ENCODE measurements at regions of chr7 and their contacts with region 1.

Region 1: DNA sequence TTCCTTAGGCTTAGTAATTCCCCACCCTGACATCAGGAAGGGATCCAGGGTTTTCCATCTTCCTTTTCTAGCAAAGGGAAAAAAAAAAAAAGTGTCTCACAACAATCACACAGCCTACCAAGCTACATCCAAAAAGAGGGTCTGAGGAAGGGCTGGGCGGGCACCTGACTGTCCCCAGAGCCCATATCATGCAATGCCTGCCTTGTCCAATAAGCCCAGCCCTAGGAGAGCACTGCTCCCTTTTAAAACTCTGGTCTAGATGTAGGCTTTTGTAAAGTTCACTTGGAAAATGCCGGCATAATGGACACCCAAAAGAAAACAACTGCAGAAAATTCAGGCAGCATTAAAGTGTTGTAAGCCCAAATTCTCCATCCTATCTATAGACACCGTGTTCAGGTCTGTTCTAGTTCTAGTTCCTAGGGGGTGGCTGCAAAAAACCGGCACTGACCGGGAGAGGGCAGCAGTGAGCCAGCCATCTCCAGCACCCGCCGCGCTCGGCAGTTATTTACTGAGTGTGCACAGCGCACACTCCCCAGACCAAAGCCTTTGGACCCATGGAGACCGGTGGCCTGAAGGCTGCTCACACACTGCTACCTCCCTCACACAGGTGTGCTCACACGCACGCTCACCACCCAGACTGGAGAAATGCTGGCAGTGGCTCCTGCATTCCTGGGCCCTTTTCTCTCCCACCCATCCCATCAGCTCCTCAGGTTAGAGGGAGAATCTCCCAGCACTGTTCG is 48.7 kb downstream of the PODXL start:
- DNase-seq: peak; percentile 90 to 91
- H3K4me3 ChIP-seq: no peak overlapping the region
- H3K27ac ChIP-seq: no peak overlapping the region
- H3K4me1 ChIP-seq: peaks cover 11 to 34% (median 21%) of the 10 kb centered on the region in 4 donors
- H3K27me3 ChIP-seq: no peaks in the 10 kb centered on the region
- CTCF ChIP-seq: peak in 5 of 7 experiments; percentile 72 to 88 (median 84)
- EP300 ChIP-seq: no peak
- POLR2A ChIP-seq: no peak

Region 2: DNA sequence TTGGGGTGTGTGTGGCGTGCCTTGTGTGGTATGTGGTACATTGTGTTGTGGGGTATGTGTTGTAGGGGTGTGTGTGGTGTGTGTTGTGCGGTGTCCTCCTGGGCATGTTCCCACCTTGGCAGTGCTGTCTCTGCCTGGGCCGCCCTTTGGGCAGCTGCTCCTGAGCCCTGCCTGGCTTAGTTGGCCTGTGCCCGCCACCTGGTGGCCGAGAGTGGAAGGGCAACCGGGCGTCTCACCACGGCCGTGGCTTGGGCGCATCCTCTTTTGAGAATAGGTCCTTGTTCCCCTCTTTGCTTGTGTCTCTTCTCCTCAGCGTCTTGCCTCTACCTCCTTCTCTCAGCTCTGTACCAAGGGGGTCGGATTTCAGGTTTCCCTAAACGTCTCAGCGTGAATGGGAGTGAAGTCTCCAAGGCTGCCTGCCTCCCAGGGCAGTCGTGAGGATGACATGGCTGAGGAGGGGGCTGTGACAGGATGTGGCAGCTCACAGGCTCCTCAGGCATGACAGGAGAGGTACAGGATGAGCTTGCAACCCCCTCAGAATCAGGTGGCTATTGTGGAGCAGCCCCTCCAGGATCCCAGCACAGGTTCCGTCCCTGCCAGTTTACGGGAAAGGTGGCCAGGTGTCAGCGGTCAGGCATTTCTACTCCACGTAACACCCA is 147.0 kb after region 1 on chr7:
- intact Hi-C with region 1: loop called (anchors 5 kb)
- DNase-seq: peak; percentile 88 to 91
- H3K4me3 ChIP-seq: no peak overlapping the region
- H3K27ac ChIP-seq: no peak overlapping the region
- H3K4me1 ChIP-seq: no peaks in the 10 kb centered on the region
- H3K27me3 ChIP-seq: peaks cover 0 to 27% (median 0%) of the 10 kb centered on the region in 3 donors
- CTCF ChIP-seq: peak in 6 of 7 experiments; percentile 87 to 96 (median 94)
- EP300 ChIP-seq: no peak
- POLR2A ChIP-seq: no peak

Measured in stomach (tissue), 19 donors.